Mucosa of descending colon (tissue), 3 donors: ENCODE measurements at regions of chr22 and their contacts with region 1.

Region 1: DNA sequence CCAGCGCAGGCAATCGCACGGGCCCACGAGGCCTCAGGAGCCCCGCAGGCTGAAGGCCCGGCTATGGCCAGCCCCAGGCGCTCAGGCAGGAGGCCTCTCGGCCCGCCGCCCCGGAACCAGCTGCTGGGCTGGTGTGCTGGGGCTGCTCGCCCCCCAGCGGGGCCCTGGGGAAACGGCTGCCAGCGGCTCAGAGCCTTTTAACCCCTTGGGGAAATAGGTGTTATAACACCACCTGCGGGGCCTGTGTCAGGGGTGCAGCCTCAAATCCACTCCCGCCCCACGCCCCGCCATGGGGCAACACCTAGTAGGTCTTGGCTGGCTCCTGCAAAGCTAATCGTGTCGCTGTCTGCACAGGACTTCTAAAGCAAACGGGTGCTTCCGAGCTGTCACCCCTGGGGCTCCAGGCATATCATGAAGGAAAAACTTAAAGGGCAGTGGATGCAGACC is 237.4 kb downstream of the TTC28 start:
- DNase-seq: peak; percentile 81 to 85 (median 83)
- ATAC-seq: peak; percentile 93
- H3K4me3 ChIP-seq: peak overlapping the region; percentile 18
- H3K4me1 ChIP-seq: peaks cover 4% of the 10 kb centered on the region
- CTCF ChIP-seq: peak; percentile 61

Region 2: DNA sequence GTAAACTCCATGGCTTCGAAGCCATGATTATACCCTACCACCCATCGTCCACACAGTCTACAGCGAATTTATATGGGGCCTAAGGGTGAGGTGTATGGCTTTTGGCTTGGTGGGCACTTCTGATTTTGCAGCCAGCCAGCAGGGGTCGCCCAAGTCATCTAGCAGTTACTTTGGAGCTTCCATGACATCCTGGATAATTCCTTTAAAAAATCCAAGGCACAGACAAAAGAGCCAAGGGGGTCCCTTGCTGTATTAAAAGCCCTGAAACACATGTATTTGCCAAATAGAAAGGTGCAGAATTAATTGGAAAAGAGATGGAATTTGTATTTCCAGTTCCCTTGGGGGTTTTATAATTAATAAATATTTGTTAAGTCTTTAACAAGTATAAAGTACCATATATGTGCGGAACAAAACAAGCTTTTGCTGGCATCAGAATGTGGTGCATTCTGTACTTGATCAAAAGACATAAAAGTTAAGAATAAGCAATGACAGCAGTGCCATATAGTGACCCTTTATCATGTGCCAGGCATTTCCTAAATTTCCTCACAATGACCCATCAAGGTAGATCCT is 390.4 kb before region 1 on chr22:
- intact Hi-C with region 1: loop called in 1 of 2 experiments (anchors 10 kb)
- DNase-seq: peak in 2 of 3 donors; percentile 75 to 76
- ATAC-seq: peak; percentile 53
- H3K4me3 ChIP-seq: no peak overlapping the region
- H3K4me1 ChIP-seq: no peaks in the 10 kb centered on the region
- CTCF ChIP-seq: peak; percentile 76

Region 3: DNA sequence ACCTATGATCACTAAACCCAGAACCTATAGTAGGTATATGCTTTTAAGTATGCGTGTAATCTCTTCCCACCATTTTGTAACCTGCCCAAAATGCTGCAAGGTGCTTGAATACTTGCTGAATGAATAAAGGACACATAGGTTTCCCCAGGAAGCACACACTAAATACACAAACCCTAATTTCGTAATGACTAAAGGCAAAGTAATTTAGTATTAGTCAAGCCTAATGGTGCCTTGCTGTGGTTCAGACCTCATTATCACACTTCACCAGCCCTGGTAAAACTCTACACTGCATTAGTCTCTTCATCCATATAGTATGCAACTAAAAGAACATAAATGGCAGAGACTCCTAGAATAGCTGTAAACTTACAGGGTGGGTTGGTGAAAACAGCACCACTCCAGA is 234.3 kb before region 1 on chr22:
- intact Hi-C with region 1: no loop called
- DNase-seq: no peak
- ATAC-seq: no peak
- H3K4me3 ChIP-seq: no peak overlapping the region
- H3K4me1 ChIP-seq: no peaks in the 10 kb centered on the region
- CTCF ChIP-seq: no peak

Region 4: GRCh38 chr22:28497188-28497587 is 54.9 kb after region 1 on chr22:
- intact Hi-C with region 1: no loop called
- DNase-seq: no peak
- ATAC-seq: no peak
- H3K4me3 ChIP-seq: no peak overlapping the region
- H3K4me1 ChIP-seq: no peaks in the 10 kb centered on the region
- CTCF ChIP-seq: no peak